Ovary (tissue), 10 donors: ENCODE measurements at regions of chr4 and their contacts with region 1.

Region 1: DNA sequence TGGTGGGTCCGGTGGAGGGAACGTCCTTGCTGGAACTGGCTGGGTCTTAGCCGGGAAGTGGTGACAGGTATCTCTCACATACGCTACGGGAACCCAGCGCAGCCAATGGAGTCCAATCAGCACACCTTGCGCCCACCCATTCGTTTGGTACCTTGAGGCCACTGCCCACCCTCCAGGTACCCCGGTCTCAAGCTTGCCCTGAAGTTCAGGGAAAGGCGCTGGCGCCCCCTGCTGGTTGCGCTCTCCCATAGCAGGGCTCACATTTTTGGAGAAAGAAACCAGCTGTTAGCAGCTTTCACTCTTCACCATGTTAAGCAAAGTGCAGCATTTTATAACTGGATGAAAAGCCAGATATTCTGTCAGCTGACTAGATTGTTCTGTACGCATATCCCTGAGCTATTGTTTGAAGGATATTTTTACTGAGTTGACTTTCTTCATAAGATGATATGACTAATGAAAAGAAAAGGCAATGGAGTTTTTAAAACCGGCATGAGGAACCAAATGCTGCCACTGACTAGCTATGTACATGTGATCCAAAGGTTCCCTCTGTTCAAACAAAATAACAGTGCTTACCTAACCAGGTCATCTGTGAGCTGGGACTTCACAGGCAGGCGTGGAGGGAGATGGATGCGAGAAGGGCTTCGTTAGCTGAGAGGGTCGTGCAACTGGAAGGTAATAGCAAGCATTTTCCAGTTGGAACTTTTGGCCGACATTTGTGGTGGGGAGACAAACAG is 43.7 kb downstream of the OTOP1 start:
- DNase-seq: no peak
- H3K4me3 ChIP-seq: no peak overlapping the region
- H3K27ac ChIP-seq: no peak overlapping the region
- H3K4me1 ChIP-seq: no peaks in the 10 kb centered on the region
- H3K27me3 ChIP-seq: no peaks in the 10 kb centered on the region
- CTCF ChIP-seq: no peak
- EP300 ChIP-seq: no peak
- POLR2A ChIP-seq: no peak

Region 2: GRCh38 chr4:4225915-4226605 is 43.1 kb after region 1 on chr4:
- intact Hi-C with region 1: loop called in 1 of 4 experiments (anchors 1 kb)
- DNase-seq: no peak
- H3K4me3 ChIP-seq: no peak overlapping the region
- H3K27ac ChIP-seq: no peak overlapping the region
- H3K4me1 ChIP-seq: no peaks in the 10 kb centered on the region
- H3K27me3 ChIP-seq: no peaks in the 10 kb centered on the region
- CTCF ChIP-seq: no peak
- EP300 ChIP-seq: no peak
- POLR2A ChIP-seq: no peak